ENCODE measurements at regions of chr1 and their contacts with region 1.

Region 1: GRCh38 chr1:1511533-1512285 is at the start of gene ATAD3A:
- DNase-seq: peak; percentile 99
- ATAC-seq: peak; percentile 97
- H3K4me3 Mint-ChIP-seq: peak within 1 kb of the TSS; percentile 93
- H3K27ac Mint-ChIP-seq: peak within 1 kb of the TSS; percentile 97
- H3K4me1 Mint-ChIP-seq: peaks cover 7% of the 10 kb centered on the region
- H3K27me3 Mint-ChIP-seq: no peaks in the 10 kb centered on the region
- total RNA-seq, gene ATAD3A: 39.9 to 42.9 TPM

Region 2: GRCh38 chr1:1349256-1350012 is 162.3 kb before region 1 on chr1 and contains the start of gene DVL1:
- CTCF ChIA-PET with region 1: no interaction called
- POLR2A ChIA-PET with region 1: no interaction called
- intact Hi-C with region 1: loop called in 1 of 2 experiments (anchors 1 kb)
- DNase-seq: peak; percentile 81
- ATAC-seq: peak; percentile 71
- H3K4me3 Mint-ChIP-seq: peak within 1 kb of the TSS; percentile 74
- H3K27ac Mint-ChIP-seq: no peak within 1 kb of the TSS
- H3K4me1 Mint-ChIP-seq: peaks cover 25% of the 10 kb centered on the region
- H3K27me3 Mint-ChIP-seq: peaks cover 11% of the 10 kb centered on the region
- total RNA-seq, gene DVL1: 35.3 to 35.5 TPM

Region 3: DNA sequence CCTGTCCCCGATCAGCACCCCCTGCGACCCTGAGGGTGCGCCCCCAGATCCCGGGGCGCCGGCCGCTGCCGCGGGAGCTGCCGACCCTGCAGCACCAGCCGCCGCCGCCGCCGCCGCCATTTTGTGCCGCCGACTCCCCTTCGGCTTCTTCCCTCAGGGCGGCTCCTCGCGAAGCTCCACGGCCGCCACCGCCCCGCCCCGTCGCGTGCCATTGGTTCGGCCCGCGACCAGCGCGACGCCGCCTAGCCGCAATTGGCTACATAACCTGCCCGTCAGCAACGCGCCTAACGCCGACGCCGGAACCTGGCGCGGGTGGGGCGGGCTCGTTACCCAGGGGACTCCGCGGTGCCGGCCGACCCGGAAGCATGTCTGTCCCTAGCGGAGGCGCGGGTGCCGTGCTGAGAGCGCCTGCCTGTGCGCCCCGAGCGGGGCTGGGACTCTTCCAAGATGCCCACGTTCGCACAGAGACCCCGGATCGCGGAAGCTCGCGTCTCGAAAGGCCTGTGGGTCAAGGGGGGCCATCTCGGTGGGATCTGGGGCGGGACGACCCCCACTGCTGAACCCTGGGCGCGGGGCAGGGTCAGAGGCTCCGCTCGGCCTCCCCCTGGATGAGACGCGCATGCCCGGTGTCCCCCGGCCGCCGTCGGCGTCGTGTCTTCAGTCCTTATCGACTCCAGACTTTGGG is 112.4 kb before region 1 on chr1 and contains the start of gene CCNL2:
- CTCF ChIA-PET with region 1: no interaction called
- POLR2A ChIA-PET with region 1: no interaction called
- intact Hi-C with region 1: loop called in 1 of 2 experiments (anchors 1 kb)
- DNase-seq: peak; percentile 100
- ATAC-seq: peak; percentile 97
- H3K4me3 Mint-ChIP-seq: peak within 1 kb of the TSS; percentile 93
- H3K27ac Mint-ChIP-seq: peak within 1 kb of the TSS; percentile 91
- H3K4me1 Mint-ChIP-seq: peaks cover 52% of the 10 kb centered on the region
- H3K27me3 Mint-ChIP-seq: no peaks in the 10 kb centered on the region
- total RNA-seq, gene CCNL2: 73.6 to 89.7 TPM

Region 4: DNA sequence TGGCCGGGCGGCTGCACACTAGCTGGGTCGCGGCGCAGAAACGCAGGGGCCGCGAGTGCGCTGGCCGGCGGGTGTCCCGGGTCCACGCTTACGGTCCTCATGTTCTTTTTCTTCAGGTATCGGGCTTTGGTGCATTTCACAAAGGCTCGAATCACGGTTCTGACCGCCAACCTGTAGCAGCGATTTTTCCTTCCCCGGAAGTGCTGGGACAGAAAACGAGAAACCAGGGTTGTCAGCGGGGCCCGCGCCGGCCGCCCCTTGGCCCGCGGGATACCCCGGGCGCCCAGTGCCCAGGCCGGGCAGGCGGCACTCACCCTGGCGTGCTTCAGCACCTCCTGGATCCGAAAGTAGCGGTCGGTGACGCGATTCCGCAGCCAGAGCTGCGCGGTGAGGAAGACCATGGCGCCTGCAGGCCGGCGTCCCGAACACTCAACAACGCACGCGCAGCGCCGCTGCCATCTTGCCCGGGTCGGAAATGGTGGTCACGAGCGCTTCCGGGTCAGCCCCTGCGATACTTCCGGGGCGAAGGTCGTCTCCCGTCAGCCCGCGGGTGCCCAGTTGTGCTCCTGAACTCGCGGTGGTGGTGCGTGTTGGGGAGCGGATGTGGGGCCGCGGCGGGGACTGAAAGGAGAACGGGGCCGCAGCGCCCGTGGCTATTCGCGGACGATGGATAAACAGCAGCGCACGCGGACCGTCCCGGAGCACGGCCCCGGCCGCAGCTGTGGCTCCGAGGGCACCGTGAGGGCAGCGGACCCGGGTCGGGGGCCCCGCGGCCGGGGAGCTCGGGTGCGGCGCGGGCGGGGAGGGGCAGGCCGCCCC is 104.7 kb before region 1 on chr1 and contains the start of gene MRPL20:
- CTCF ChIA-PET with region 1: no interaction called
- POLR2A ChIA-PET with region 1: no interaction called
- intact Hi-C with region 1: loop called in 1 of 2 experiments (anchors 1 kb)
- DNase-seq: peak; percentile 98
- ATAC-seq: peak; percentile 95
- H3K4me3 Mint-ChIP-seq: peak within 1 kb of the TSS; percentile 92
- H3K27ac Mint-ChIP-seq: peak within 1 kb of the TSS; percentile 91
- H3K4me1 Mint-ChIP-seq: peaks cover 41% of the 10 kb centered on the region
- H3K27me3 Mint-ChIP-seq: no peaks in the 10 kb centered on the region
- total RNA-seq, gene MRPL20: 126 to 143 TPM

Region 5: DNA sequence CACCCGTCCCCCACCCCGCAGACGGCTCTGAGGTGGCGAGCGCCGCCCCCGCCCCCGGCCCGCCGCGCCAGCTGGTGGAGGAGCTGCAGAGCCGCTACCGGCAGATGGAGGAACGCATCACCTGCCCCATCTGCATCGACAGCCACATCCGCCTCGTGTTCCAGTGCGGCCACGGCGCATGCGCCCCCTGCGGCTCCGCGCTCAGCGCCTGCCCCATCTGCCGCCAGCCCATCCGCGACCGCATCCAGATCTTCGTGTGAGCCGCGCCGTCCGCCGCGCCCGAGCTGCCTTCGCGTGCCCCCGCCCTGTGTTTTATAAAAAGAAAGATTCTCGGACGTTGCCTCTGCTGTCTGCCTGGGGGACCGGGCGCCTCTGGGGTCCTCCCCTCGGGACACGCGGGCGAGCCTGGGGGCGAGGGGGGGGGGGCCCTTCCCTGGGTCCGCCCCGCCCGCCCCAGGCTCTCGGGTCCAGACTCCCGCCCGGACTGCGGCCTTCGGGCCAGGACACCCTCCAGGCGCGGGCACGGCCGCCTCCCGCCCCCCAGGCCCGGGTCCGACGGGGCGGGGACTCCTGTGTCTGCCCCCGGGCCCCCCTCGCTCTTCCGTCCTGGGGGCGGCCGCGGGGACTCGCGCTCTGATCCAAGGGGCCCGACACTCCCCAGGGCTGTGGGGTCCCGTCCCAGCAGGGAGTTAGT is 118.7 kb after region 1 on chr1:
- CTCF ChIA-PET with region 1: no interaction called
- POLR2A ChIA-PET with region 1: no interaction called
- intact Hi-C with region 1: loop called in 1 of 2 experiments (anchors 5 kb)
- DNase-seq: peak; percentile 96
- ATAC-seq: peak; percentile 81
- H3K4me3 Mint-ChIP-seq: peak overlapping the region; percentile 66
- H3K27ac Mint-ChIP-seq: peak overlapping the region; percentile 86
- H3K4me1 Mint-ChIP-seq: peaks cover 7% of the 10 kb centered on the region
- H3K27me3 Mint-ChIP-seq: peaks cover 4% of the 10 kb centered on the region